BJ (cell line): ENCODE measurements at regions of chr4 and their contacts with region 1.

Region 1: GRCh38 chr4:138090150-138090917 is 151.8 kb downstream of the SLC7A11 start:
- DNase-seq: peak; percentile 41
- H3K4me3 ChIP-seq: peak overlapping the region; percentile 26
- H3K27me3 ChIP-seq: no peaks in the 10 kb centered on the region
- CTCF ChIP-seq: peak; percentile 64

Region 2: DNA sequence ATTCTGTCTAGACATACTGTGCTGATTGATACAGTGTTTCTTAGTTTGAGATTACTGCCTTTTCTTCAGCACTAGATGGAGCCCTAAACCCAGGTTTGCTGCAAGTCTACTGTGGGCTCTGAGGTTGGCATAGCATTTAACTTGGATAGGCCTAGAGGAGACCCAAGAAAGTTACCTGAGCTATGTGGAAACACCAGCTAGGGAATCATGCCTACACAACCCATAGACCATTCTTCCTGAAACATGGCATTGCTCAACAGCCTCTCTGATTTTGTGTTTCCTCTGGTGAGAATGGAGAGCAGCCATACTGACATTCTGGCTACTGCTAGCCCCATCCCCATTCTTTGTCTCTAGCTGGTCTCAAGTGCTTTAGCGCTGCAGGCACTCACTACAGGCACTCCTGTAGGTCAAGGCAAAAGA is 270.4 kb before region 1 on chr4:
- CTCF ChIA-PET with region 1: interaction called, 28 read pairs
- POLR2A ChIA-PET with region 1: no interaction called
- DNase-seq: no peak
- H3K4me3 ChIP-seq: no peak overlapping the region
- H3K27me3 ChIP-seq: no peaks in the 10 kb centered on the region
- CTCF ChIP-seq: peak; percentile 71

Region 3: GRCh38 chr4:137994871-137995270 is 95.5 kb before region 1 on chr4:
- CTCF ChIA-PET with region 1: no interaction called
- POLR2A ChIA-PET with region 1: no interaction called
- DNase-seq: peak; percentile 26
- H3K4me3 ChIP-seq: no peak overlapping the region
- H3K27me3 ChIP-seq: no peaks in the 10 kb centered on the region
- CTCF ChIP-seq: no peak

Region 4: DNA sequence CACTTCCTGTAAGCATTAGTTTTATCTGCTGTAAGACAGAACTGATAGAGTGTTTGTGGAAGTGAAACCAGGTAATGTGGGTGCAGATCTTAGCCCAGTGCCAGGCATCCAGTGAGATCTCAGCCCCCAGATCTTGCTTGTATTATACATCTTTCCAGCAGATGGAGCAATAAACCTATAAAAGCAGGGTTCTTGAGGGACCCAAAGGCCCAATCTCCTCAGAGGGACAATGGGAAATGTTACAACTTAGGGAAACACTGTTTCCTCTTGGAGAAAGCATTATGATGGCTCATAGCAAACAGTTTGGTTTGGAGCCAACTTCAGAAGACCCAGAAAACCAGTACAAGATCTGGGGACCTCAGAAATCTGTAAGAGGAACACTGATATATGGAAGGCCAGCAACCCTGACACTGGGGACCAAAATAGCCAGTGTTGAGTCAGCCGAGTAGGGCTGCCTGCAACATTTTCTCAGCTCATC is 54.5 kb before region 1 on chr4:
- CTCF ChIA-PET with region 1: interaction called, 147 read pairs
- POLR2A ChIA-PET with region 1: interaction called, 3 read pairs
- DNase-seq: no peak
- H3K4me3 ChIP-seq: no peak overlapping the region
- H3K27me3 ChIP-seq: no peaks in the 10 kb centered on the region
- CTCF ChIP-seq: peak; percentile 56

Region 5: GRCh38 chr4:138078751-138079520 is 11.4 kb before region 1 on chr4:
- CTCF ChIA-PET with region 1: interaction called, 11 read pairs
- POLR2A ChIA-PET with region 1: no interaction called
- DNase-seq: no peak
- H3K4me3 ChIP-seq: no peak overlapping the region
- H3K27me3 ChIP-seq: no peaks in the 10 kb centered on the region
- CTCF ChIP-seq: no peak

Region 6: GRCh38 chr4:138138774-138139173 is 48.4 kb after region 1 on chr4:
- CTCF ChIA-PET with region 1: no interaction called
- POLR2A ChIA-PET with region 1: no interaction called
- DNase-seq: no peak
- H3K4me3 ChIP-seq: no peak overlapping the region
- H3K27me3 ChIP-seq: no peaks in the 10 kb centered on the region
- CTCF ChIP-seq: no peak

Region 7: DNA sequence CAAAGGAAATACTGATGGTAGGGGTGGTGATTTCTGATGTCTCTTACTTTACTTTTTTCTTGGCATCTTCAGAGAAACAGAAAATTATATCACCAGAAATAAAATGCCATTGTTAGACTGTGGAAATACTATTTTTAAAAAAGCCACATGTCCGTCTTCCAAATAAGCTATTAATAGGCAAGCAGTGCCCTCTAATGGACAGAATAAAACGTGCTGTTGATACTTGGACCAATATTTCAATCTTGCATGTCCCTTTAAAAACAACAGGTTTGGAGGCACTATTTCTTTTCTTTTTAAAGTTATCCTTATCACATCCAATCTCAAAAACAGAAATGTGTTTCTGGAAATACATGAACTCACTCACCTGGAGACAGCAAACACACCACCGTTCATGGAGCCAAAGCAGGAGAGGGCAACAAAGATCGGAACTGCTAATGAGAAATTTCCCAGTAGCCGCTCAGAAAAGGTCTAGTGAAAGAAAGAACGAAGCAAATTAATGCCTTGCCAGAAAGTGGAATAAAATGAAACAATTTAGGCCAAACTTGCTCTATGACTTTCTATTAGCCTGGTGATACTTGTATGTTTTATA is 92.6 kb after region 1 on chr4:
- CTCF ChIA-PET with region 1: interaction called, 11 read pairs
- POLR2A ChIA-PET with region 1: no interaction called
- DNase-seq: peak; percentile 16
- H3K4me3 ChIP-seq: no peak overlapping the region
- H3K27me3 ChIP-seq: no peaks in the 10 kb centered on the region
- CTCF ChIP-seq: peak; percentile 65

Region 8: GRCh38 chr4:138680989-138681604 is 590.8 kb after region 1 on chr4:
- CTCF ChIA-PET with region 1: interaction called, 18 read pairs
- POLR2A ChIA-PET with region 1: no interaction called
- DNase-seq: no peak
- H3K4me3 ChIP-seq: no peak overlapping the region
- H3K27me3 ChIP-seq: peaks cover 4% of the 10 kb centered on the region
- CTCF ChIP-seq: peak; percentile 80